MCF 10A (cell line): ENCODE measurements at regions of chr6 and their contacts with region 1.

Region 1: GRCh38 chr6:89638320-89639195 is at the start of gene LYRM2:
- DNase-seq: peak; percentile 95
- H3K4me3 Mint-ChIP-seq: peak within 1 kb of the TSS; percentile 76
- H3K27ac Mint-ChIP-seq: peak within 1 kb of the TSS; percentile 92
- H3K4me1 Mint-ChIP-seq: peaks cover 16% of the 10 kb centered on the region
- H3K27me3 Mint-ChIP-seq: no peaks in the 10 kb centered on the region
- CTCF ChIP-seq: no peak
- total RNA-seq, gene LYRM2: 41.1 and 43.8 TPM in 2 replicates

Region 2: GRCh38 chr6:89297695-89298351 is 340.7 kb before region 1 on chr6:
- CTCF ChIA-PET with region 1: no interaction called
- POLR2A ChIA-PET with region 1: no interaction called
- intact Hi-C with region 1: no loop called
- DNase-seq: peak; percentile 99
- H3K4me3 Mint-ChIP-seq: peak overlapping the region; percentile 59
- H3K27ac Mint-ChIP-seq: peak overlapping the region; percentile 68
- H3K4me1 Mint-ChIP-seq: peaks cover 7% of the 10 kb centered on the region
- H3K27me3 Mint-ChIP-seq: peaks cover 46% of the 10 kb centered on the region
- CTCF ChIP-seq: no peak

Region 3: DNA sequence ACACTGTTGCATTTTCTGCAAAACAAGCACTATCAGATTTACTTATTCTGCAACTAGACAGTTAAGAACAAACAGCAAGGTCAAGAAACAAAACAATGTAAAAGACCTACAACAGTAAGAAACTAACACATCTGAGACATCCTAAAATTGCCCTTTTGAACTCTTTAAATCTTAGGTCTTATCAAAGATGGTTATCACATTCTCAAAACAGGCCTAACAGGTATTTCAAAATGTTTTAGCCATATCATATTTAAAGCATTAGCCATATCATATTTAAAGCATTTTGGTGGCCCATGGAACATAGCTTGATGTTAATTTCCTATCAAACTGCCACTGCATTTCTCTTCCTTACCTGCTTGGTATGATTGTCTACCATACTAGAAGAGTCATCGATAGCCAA is 11.1 kb after region 1 on chr6:
- CTCF ChIA-PET with region 1: no interaction called
- POLR2A ChIA-PET with region 1: interaction called, 13 read pairs
- intact Hi-C with region 1: no loop called
- DNase-seq: no peak
- H3K4me3 Mint-ChIP-seq: no peak overlapping the region
- H3K27ac Mint-ChIP-seq: no peak overlapping the region
- H3K4me1 Mint-ChIP-seq: peaks cover 7% of the 10 kb centered on the region
- H3K27me3 Mint-ChIP-seq: no peaks in the 10 kb centered on the region
- CTCF ChIP-seq: no peak

Region 4: DNA sequence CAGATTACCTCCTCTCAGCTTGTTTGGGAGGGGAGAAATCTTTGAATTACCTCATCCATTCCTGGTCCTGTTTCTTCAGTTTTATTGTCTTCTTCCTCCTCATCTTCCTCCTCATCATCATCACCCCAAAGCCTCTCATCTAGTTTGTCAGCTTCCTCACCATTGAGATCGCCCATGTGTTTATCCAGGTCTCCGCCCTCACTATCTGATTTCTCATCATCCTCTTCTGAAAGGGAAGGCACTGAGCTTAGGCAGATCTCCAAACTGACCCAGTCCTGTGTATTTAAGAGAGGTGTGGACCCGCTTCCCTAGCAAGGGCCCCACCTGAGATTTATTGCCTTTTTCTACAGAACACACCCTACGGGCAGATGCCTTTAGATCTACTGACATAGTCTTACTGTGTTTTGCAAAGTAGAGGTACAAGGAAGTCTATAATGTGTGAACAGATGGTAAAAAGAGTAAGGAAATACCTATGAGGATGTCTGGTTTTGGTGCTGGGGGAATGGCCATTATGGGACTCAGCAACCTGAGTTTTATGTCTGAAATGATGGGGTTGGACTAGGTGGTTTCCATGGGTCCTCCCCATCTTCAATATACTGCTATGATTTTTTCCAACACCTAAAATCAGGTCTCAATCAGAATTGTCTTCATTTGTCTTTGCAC is 24.3 kb after region 1 on chr6:
- CTCF ChIA-PET with region 1: no interaction called
- POLR2A ChIA-PET with region 1: interaction called, 11 read pairs
- intact Hi-C with region 1: no loop called
- DNase-seq: no peak
- H3K4me3 Mint-ChIP-seq: no peak overlapping the region
- H3K27ac Mint-ChIP-seq: no peak overlapping the region
- H3K4me1 Mint-ChIP-seq: no peaks in the 10 kb centered on the region
- H3K27me3 Mint-ChIP-seq: no peaks in the 10 kb centered on the region
- CTCF ChIP-seq: no peak

Region 5: GRCh38 chr6:89763550-89763949 is 125.0 kb after region 1 on chr6:
- CTCF ChIA-PET with region 1: no interaction called
- POLR2A ChIA-PET with region 1: no interaction called
- intact Hi-C with region 1: no loop called
- DNase-seq: peak; percentile 24
- H3K4me3 Mint-ChIP-seq: no peak overlapping the region
- H3K27ac Mint-ChIP-seq: no peak overlapping the region
- H3K4me1 Mint-ChIP-seq: no peaks in the 10 kb centered on the region
- H3K27me3 Mint-ChIP-seq: no peaks in the 10 kb centered on the region
- CTCF ChIP-seq: no peak